Dendritic cell treated with granulocyte-macrophage colony-stimulating factor and Interleukin-4, amounts not matched to agents 40 ng/mL and 50 ng/mL, for 4 days (primary cell): ENCODE measurements at regions of chrX and their contacts with region 1.

Region 1: GRCh38 chrX:136496770-136497598 is at the start of gene HTATSF1:
- H3K4me3 Mint-ChIP-seq: peak within 1 kb of the TSS; percentile 77
- H3K27ac Mint-ChIP-seq: peak within 1 kb of the TSS; percentile 89
- H3K4me1 Mint-ChIP-seq: peaks cover 10% of the 10 kb centered on the region
- H3K27me3 Mint-ChIP-seq: no peaks in the 10 kb centered on the region

Region 2: GRCh38 chrX:135340831-135341230 is 1156.2 kb before region 1 on chrX:
- intact Hi-C with region 1: no loop called
- H3K4me3 Mint-ChIP-seq: no peak overlapping the region
- H3K27ac Mint-ChIP-seq: no peak overlapping the region
- H3K4me1 Mint-ChIP-seq: peaks cover 61% of the 10 kb centered on the region
- H3K27me3 Mint-ChIP-seq: no peaks in the 10 kb centered on the region

Region 3: DNA sequence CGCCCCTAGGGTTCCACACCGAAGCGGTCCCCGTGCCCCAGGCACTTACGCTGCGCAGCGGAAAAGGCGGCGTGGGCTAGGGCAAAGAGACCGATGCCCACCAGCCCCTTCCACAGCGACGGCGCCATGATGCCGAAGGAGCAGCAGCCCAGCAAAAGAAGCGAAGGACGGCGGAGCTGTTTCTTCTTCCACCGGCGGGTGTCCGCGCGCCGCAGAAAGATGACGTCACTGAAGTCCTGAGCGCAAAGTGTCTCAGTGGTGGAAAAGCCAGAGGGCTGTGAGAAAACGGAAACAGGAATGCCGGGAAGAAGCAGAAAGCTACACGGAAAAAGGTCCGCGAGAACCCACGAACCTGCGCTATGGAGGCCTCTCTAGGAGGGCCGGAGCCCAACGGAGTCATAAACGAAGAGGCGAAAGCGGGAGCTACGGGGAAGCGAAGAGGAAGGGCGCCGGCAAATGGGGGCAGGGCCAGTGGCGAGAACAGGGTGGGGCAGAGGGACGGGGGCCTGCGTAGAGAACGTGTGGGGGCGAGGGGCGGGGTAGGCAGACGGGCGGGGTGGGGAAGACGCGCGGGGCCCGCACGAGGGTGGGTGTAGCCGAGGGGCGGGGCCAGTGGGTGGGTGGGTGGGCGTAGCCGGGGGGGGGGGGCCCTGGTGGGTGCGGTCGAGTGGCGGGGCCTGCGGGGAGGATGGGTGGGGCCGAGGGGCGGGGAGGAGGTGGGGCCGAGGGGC is 523.3 kb before region 1 on chrX and contains the start of gene MMGT1:
- intact Hi-C with region 1: loop called (anchors 5 kb)
- H3K4me3 Mint-ChIP-seq: peak within 1 kb of the TSS; percentile 98
- H3K27ac Mint-ChIP-seq: peak within 1 kb of the TSS; percentile 100
- H3K4me1 Mint-ChIP-seq: peaks cover 16% of the 10 kb centered on the region
- H3K27me3 Mint-ChIP-seq: no peaks in the 10 kb centered on the region

Region 4: GRCh38 chrX:136246201-136246600 is 250.8 kb before region 1 on chrX:
- intact Hi-C with region 1: loop called (anchors 10 kb)
- H3K4me3 Mint-ChIP-seq: no peak overlapping the region
- H3K27ac Mint-ChIP-seq: no peak overlapping the region
- H3K4me1 Mint-ChIP-seq: peaks cover 11% of the 10 kb centered on the region
- H3K27me3 Mint-ChIP-seq: no peaks in the 10 kb centered on the region